H1 (cell line): ENCODE measurements at regions of chr2 and their contacts with region 1.

Region 1: GRCh38 chr2:152456262-152456661 is 121.3 kb downstream of the FMNL2 start:
- DNase-seq: no peak
- H3K4me3 ChIP-seq: no peak overlapping the region
- H3K27ac ChIP-seq: no peak overlapping the region
- H3K4me1 ChIP-seq: peaks cover 10 to 33% (median 18%) of the 10 kb centered on the region in 4 experiments; a peak in 6 of 7 replicates
- H3K27me3 ChIP-seq: no peaks in the 10 kb centered on the region
- CTCF ChIP-seq: no peak
- EP300 ChIP-seq: no peak
- POLR2A ChIP-seq: no peak
- RAD21 ChIP-seq: no peak

Region 2: DNA sequence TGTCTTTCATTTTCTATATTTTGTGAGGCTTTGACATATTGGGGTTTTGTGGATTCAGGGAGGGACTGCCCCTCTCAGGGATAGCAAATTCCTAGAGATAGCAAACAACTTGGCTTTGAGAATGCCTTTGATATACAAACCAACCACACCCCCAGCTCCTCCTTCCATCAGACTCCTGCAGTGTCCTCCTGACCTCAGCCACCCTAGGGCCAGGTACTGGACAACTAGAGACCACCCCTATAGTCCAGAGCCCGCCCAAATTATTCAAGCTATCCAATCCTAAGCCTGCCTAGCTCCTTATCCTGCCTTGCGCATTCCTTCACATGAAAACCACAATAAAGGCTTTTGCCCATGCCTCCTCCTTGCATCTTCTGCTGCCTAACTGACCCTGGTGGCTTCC is 257.8 kb before region 1 on chr2:
- CTCF ChIA-PET with region 1: no interaction called
- POLR2A ChIA-PET with region 1: no interaction called
- DNase-seq: no peak
- H3K4me3 ChIP-seq: no peak overlapping the region
- H3K27ac ChIP-seq: no peak overlapping the region
- H3K4me1 ChIP-seq: peaks cover 0 to 6% (median 0%) of the 10 kb centered on the region in 4 experiments; a peak in 1 of 7 replicates
- H3K27me3 ChIP-seq: no peaks in the 10 kb centered on the region
- CTCF ChIP-seq: no peak
- EP300 ChIP-seq: no peak
- POLR2A ChIP-seq: no peak
- RAD21 ChIP-seq: no peak

Region 3: GRCh38 chr2:152383702-152384101 is 72.6 kb before region 1 on chr2:
- CTCF ChIA-PET with region 1: no interaction called
- POLR2A ChIA-PET with region 1: no interaction called
- DNase-seq: no peak
- H3K4me3 ChIP-seq: no peak overlapping the region
- H3K27ac ChIP-seq: no peak overlapping the region
- H3K4me1 ChIP-seq: peaks cover 0 to 5% (median 2%) of the 10 kb centered on the region in 4 experiments; a peak in 3 of 7 replicates
- H3K27me3 ChIP-seq: no peaks in the 10 kb centered on the region
- CTCF ChIP-seq: no peak
- EP300 ChIP-seq: no peak
- POLR2A ChIP-seq: no peak
- RAD21 ChIP-seq: no peak

Region 4: GRCh38 chr2:152466980-152467676 is 10.9 kb after region 1 on chr2:
- CTCF ChIA-PET with region 1: interaction called, 10 read pairs
- POLR2A ChIA-PET with region 1: interaction called, 24 read pairs
- DNase-seq: peak in 1 of 2 experiments; percentile 23
- H3K4me3 ChIP-seq: no peak overlapping the region
- H3K27ac ChIP-seq: no peak overlapping the region
- H3K4me1 ChIP-seq: peaks cover 0 to 32% (median 14%) of the 10 kb centered on the region in 4 experiments
- H3K27me3 ChIP-seq: no peaks in the 10 kb centered on the region
- CTCF ChIP-seq: no peak
- EP300 ChIP-seq: no peak
- POLR2A ChIP-seq: no peak
- RAD21 ChIP-seq: no peak

Region 5: DNA sequence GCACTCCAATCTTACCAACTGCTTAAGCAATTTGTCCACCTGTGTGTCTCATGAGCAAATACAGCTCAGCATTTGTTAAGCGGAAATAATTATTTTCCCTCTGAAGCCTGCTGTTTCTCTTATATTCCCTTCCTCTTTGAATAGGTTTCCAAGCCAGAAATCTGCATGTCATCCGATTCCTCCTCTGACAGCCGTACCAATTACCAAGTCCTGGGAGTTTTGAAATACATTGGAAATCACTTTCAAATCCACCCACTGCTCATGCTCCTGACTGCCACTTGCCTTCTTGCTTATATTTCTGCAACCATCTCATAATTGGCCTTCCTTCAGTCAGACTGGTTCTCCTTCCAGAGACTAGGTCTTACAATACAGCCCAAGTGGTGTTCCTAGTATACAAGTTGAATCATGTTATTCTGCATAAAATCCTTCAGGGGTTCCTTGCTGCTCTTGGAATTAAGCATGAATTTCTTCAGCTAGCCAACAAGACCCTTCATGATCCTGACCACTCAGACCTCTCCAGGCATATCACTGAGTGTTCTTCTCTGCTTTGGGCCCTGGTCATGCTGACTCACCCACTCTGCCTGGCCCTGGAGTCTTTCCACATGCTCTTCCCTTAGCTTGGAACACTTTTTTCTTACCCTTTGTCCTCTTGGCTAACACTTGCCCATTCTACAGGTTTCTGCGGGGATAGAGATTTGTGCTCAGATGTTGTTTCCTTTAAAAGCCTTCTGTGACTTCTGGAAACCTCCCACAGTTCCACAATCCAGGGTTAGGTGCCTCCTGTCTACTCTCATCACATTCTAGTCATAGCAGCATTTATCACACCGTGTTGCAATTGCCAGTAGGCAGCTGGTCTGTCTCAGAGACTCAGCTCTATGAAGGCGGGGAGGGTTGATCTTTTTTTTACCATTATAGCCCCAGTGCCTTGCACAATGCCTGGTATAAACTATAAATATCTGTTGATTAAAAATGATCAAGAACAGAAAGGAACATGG is 419.7 kb after region 1 on chr2:
- CTCF ChIA-PET with region 1: no interaction called
- POLR2A ChIA-PET with region 1: no interaction called
- DNase-seq: no peak
- H3K4me3 ChIP-seq: no peak overlapping the region
- H3K27ac ChIP-seq: peak overlapping the region; percentile 25; the same call in 1 of the 2 replicates
- H3K4me1 ChIP-seq: no peaks in the 10 kb centered on the region; a peak in 1 of 7 replicates
- H3K27me3 ChIP-seq: no peaks in the 10 kb centered on the region
- CTCF ChIP-seq: no peak
- EP300 ChIP-seq: no peak
- POLR2A ChIP-seq: no peak
- RAD21 ChIP-seq: no peak